ENCODE measurements at regions of chr17 and their contacts with region 1.

Region 1: DNA sequence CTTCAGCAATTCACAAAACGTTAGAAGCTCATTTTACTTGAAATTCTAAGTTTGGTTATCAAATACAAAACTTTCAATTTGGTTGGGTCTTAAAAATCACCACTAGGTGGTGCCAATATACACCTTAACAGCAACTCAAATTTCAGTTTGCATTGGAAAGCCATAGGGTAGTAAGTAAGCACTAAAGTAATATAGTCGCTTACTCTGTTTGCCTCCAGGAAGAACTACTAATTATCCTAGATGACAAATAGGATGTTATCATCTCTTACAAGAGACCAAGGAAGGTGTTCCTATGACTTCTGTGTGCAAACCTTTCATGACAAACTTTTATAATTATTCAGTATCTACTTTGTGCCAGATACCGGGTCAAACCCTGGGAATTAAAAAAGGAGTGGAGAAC is 93.3 kb downstream of the MYO1D start:
- DNase-seq: no peak

Region 2: DNA sequence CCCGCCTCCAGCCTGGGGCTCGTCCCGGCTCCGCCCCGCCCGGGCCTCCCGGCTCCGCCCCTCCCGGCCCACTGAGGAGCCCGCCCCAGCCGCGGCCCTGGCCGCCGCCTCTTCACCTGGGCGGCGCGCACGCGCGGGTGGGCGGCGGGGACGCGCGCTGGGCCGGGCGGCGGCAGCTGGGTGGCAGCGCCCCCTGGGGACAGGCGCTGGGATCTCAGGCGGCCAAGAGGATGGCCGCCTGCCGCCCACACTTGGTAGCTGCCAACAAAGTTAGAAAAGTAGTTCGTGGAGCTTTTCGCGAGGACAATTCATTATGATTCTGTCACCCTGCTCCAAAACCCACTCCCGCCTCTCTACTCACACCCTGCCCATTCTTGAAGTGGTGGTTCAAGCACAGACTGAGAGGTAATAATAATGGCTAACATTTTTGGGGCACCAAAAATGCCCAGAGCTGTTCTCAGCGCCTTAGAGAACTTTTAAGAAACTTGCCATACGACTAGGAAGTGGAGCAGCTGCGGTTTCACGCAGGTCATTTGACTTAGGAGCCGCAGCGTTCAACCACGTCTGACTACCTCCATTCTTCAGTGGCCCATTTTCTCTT is 93.7 kb after region 1 on chr17:
- intact Hi-C with region 1: loop called (anchors 1 to 2 kb)
- DNase-seq: peak; percentile 97

Region 3: DNA sequence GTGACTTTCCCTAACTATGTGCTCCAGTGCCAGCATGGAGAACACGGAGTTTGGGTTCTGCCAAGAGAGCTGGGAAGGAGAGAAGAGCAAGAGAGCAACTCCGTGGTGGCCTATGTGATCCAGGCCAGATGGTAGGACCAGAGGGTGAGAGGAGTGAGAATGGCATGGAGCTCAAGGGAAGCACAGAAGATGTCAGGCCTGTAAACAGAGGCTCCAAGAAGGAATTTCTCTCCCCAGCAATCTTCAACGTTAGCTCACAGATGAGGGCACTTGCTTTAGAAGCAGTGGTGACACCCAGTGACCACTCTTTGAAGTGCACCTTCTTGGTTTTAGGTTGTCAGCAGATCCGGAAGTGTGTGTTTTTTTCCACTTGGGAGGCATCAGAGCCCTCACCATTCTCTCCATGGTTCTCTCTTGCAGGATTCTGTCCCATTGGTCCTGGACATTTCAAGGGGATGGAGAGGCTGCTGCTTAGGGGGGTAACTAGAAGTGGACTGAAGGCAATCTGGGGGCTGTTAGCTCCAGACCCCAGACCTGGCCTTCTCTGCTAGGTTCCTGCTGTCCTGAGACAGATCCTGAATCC is 126.3 kb after region 1 on chr17:
- intact Hi-C with region 1: loop called in 1 of 2 experiments (anchors 10 kb)
- DNase-seq: no peak

Region 4: DNA sequence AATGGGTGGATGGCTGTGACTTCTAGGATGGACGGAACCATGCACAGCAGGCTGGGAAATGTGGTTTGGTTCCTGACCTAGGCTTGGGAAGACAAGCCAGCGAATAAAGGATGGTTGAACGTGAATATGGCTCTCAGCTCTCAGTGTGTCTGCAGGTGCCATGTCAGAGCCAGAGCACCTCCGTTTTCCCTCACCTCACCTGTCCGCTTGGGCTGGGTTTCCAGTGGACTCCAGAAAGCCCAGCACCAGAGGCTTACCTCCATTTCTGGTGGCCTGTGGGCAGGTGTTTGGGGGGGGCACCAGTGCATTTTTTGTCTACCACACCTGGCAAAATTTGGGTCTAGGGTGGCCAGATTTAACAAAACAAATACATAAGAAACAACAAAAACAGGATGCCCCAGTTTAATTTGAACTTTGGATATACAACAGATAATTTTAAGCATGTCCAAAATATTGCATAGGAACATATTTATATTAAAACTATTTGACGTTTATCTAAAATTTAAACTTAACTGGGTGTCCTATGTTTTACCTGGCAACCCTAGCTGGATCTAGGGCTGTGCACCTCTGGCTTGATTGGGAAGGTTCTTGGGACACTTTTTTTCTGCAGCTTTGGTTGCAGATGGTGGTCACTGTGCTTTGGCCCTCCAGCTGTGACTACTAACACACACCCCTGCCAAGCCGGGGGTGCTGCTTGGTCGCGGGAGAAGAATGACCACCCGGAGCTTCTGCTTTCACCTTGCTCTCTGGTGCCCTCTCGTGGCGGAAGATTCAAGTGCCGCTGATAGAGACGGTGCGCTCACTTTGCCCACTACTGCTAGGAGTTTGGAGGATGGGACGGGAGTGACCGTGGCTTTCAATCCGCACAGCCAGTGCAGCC is 214.4 kb after region 1 on chr17:
- intact Hi-C with region 1: no loop called
- DNase-seq: peak; percentile 91

Measured in posterior vena cava (tissue), 2 donors.